ENCODE measurements at regions of chr11 and their contacts with region 1.

Region 1: GRCh38 chr11:16785520-16786128 is 47.2 kb downstream of the C11orf58 start:
- DNase-seq: peak; percentile 72
- H3K4me3 Mint-ChIP-seq: no peak overlapping the region
- H3K27ac Mint-ChIP-seq: no peak overlapping the region
- H3K4me1 Mint-ChIP-seq: peaks cover 21% of the 10 kb centered on the region
- H3K27me3 Mint-ChIP-seq: no peaks in the 10 kb centered on the region
- CTCF ChIP-seq: peak; percentile 92

Region 2: DNA sequence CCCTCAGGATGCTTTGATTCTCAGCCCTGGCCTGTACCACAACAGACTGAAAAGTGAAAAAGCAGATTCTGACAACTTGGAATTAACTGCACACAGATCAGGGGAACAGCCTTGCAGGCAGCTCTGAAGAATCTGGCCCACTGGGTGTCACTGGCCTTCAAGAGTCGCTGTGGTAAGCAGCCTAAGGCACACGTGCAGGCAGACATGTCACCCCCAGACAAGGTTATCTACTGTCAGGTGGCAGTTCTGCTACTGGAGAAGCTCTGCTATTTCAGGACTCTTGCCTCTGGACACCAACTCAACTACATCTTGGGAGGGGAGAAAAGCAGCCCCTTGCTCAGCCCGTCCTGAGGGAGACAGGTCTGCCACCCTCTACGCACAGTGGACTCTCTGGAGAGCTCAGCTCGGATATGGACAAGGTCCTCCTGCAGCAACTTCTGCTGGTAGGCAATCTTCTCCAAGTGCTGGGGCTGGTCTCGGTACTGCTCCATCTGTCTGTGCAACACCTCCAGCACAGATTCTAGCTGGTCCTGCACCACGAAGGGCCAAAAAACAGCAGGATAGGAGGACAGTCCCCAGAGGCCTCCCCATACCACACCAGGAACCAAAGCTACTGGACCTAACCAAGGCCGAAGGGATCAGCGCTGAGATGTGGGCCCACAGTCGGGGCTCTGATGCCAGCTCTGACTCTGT is 15.8 kb after region 1 on chr11:
- CTCF ChIA-PET with region 1: interaction called, 13 read pairs
- POLR2A ChIA-PET with region 1: no interaction called
- intact Hi-C with region 1: no loop called
- DNase-seq: no peak
- H3K4me3 Mint-ChIP-seq: no peak overlapping the region
- H3K27ac Mint-ChIP-seq: no peak overlapping the region
- H3K4me1 Mint-ChIP-seq: no peaks in the 10 kb centered on the region
- H3K27me3 Mint-ChIP-seq: no peaks in the 10 kb centered on the region
- CTCF ChIP-seq: no peak

Region 3: DNA sequence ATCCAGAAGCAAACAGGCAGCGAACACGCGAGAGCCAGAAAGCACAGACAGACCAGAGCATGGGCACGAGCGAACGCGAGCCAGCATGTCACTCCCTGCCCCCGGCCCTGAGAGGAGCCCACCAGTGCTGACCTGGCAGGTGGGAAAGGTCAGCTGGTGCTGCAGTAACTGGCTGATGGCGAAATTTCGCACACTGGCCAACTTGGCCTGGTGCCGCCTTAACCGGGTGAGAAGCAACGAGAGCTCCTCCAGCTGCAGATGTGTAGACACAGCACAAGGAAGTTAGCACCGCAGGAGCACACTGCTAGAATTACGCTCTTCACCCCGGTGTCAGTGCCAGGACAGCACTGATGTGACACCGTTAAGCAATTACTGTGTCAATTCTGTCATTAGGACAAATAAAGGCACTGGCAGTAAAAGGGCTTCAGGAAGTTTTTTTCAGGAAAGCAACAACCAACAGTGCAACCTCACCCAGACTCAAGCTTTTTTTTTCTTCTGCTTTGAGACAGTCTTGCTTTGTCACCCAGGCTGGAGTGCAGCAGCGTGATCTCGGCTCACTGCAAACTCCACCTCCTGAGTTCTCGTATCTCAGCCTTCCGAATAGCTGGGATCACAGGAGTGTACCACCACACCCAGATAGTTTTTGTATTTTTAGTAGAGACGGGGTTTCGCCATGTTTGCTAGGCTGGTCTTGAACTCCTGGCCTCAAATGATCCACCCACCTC is 29.6 kb after region 1 on chr11:
- CTCF ChIA-PET with region 1: interaction called, 62 read pairs
- POLR2A ChIA-PET with region 1: interaction called, 4 read pairs
- intact Hi-C with region 1: loop called (anchors 1 kb)
- DNase-seq: no peak
- H3K4me3 Mint-ChIP-seq: no peak overlapping the region
- H3K27ac Mint-ChIP-seq: no peak overlapping the region
- H3K4me1 Mint-ChIP-seq: peaks cover 3% of the 10 kb centered on the region
- H3K27me3 Mint-ChIP-seq: no peaks in the 10 kb centered on the region
- CTCF ChIP-seq: no peak

Region 4: GRCh38 chr11:16871368-16871767 is 85.7 kb after region 1 on chr11:
- CTCF ChIA-PET with region 1: interaction called, 11 read pairs
- POLR2A ChIA-PET with region 1: no interaction called
- intact Hi-C with region 1: no loop called
- DNase-seq: no peak
- H3K4me3 Mint-ChIP-seq: no peak overlapping the region
- H3K27ac Mint-ChIP-seq: no peak overlapping the region
- H3K4me1 Mint-ChIP-seq: no peaks in the 10 kb centered on the region
- H3K27me3 Mint-ChIP-seq: no peaks in the 10 kb centered on the region
- CTCF ChIP-seq: no peak

Region 5: GRCh38 chr11:16935518-16936302 is 150.1 kb after region 1 on chr11:
- CTCF ChIA-PET with region 1: interaction called, 8 read pairs
- POLR2A ChIA-PET with region 1: no interaction called
- intact Hi-C with region 1: loop called (anchors 2 kb)
- DNase-seq: peak; percentile 64
- H3K4me3 Mint-ChIP-seq: no peak overlapping the region
- H3K27ac Mint-ChIP-seq: no peak overlapping the region
- H3K4me1 Mint-ChIP-seq: no peaks in the 10 kb centered on the region
- H3K27me3 Mint-ChIP-seq: no peaks in the 10 kb centered on the region
- CTCF ChIP-seq: peak; percentile 62

Region 6: GRCh38 chr11:17008099-17008498 is 222.5 kb after region 1 on chr11:
- CTCF ChIA-PET with region 1: no interaction called
- POLR2A ChIA-PET with region 1: no interaction called
- intact Hi-C with region 1: no loop called
- DNase-seq: peak; percentile 70
- H3K4me3 Mint-ChIP-seq: no peak overlapping the region
- H3K27ac Mint-ChIP-seq: no peak overlapping the region
- H3K4me1 Mint-ChIP-seq: no peaks in the 10 kb centered on the region
- H3K27me3 Mint-ChIP-seq: no peaks in the 10 kb centered on the region
- CTCF ChIP-seq: no peak

Region 7: GRCh38 chr11:17063171-17064002 is 277.8 kb after region 1 on chr11:
- CTCF ChIA-PET with region 1: interaction called, 72 read pairs
- POLR2A ChIA-PET with region 1: interaction called, 5 read pairs
- intact Hi-C with region 1: loop called (anchors 1 kb)
- DNase-seq: peak; percentile 65
- H3K4me3 Mint-ChIP-seq: no peak overlapping the region
- H3K27ac Mint-ChIP-seq: no peak overlapping the region
- H3K4me1 Mint-ChIP-seq: no peaks in the 10 kb centered on the region
- H3K27me3 Mint-ChIP-seq: no peaks in the 10 kb centered on the region
- CTCF ChIP-seq: peak; percentile 80